ENCODE measurements at regions of chr1 and their contacts with region 1.

Region 1: DNA sequence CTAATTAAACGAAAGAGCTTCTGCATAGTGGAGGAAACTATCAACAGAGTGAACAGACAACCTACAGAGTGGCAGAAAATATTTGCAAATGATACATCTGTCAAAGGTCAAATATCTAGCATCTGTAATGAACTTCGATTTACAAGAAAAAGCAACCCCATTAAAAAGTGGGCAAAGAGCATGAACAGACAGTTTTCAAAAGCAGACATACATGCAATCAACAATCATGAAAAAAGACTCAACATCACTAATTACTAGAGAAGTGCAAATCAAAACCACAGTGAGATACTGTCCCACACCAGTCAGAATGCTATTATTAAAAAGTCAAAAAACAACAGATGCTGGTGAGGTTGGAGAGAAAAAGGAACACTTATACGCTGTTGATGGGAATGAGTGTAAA is 103.2 kb downstream of the MAGI3 start:
- DNase-seq: no peak
- H3K4me3 ChIP-seq: no peak overlapping the region
- H3K27ac ChIP-seq: no peak overlapping the region
- H3K27me3 ChIP-seq: no peaks in the 10 kb centered on the region
- CTCF ChIP-seq: no peak

Region 2: DNA sequence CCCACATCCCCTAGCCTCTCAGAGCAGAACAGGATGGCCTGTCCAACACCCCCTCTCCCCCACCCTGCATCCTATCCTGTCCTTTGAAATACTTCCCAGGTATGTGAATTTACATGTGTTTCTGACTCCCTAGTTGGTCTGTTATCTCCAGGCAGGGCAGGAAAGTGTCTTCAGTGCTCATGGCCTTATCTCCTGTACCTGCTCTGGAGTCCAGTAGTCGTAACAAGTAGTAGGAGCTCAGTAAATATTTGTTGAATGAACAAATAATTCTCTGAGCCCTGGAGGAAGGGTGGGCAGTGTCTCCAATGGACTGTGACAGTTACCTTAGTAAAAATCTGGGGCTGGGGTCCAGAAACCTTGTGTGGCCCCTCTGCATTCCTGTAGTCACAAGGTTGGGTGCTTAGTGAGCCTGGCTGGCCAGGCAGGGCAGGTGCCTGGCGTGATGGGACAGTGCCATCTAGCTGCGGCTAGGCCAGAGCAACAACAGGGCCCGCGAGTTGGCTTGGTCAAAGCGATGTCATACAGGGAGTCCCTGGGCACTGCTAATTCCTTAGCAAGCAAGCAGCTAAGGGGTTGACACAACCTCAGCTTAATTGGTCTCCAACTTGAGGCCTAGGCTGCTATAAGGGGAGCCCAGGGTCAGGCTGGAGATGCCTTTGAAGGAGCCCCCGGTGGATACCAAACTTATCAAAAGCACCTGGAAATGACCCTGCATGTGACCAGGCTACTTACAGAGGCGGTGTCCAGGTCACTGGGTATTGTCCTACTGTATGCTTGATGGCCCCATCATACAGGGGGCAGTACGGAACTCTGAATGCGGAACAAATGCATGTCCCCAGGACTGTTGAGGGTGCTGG is 689.4 kb before region 1 on chr1:
- CTCF ChIA-PET with region 1: interaction called, 12 read pairs
- POLR2A ChIA-PET with region 1: no interaction called
- DNase-seq: peak; percentile 33
- H3K4me3 ChIP-seq: no peak overlapping the region
- H3K27ac ChIP-seq: peak overlapping the region; percentile 11
- H3K27me3 ChIP-seq: peaks cover 16% of the 10 kb centered on the region
- CTCF ChIP-seq: peak; percentile 87

Region 3: DNA sequence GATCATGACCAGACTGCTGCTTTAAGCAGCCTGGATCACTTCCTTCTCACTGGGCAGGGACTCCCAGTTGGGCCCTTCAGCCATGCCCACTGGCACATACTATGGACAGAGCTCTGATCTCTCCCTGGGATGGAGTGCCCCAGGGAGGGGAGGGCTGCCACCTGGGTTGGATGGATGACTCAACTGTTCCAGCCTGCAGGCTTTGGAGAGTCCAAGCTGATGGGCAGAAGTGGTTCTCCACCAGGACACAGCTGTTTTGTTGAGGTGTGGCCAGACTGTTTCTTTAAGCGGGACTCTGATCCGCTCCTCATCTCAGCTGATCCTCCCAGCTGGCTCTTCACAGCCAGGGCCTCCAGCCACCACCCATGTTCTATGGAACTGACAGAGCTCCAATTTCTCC is 63.6 kb after region 1 on chr1:
- CTCF ChIA-PET with region 1: no interaction called
- POLR2A ChIA-PET with region 1: no interaction called
- DNase-seq: no peak
- H3K4me3 ChIP-seq: no peak overlapping the region
- H3K27ac ChIP-seq: no peak overlapping the region
- H3K27me3 ChIP-seq: no peaks in the 10 kb centered on the region
- CTCF ChIP-seq: no peak